Activated T-helper 2 cell treated with anti-CD3 and anti-CD28 coated beads, Interferon-gamma antibody, Interleukin-2, Interleukin-4, amounts not matched to agents 10 μg/mL and 5 μg/mL and 100 μg/mL, durations not matched to agents 14 hours and 24 hours and 36 hours (primary cell): ENCODE measurements at regions of chr9 and their contacts with region 1.

Region 1: GRCh38 chr9:121213136-121213806 is 11.6 kb upstream of the RAB14 start:
- DNase-seq: peak; percentile 53
- H3K4me3 Mint-ChIP-seq: no peak overlapping the region
- H3K27ac Mint-ChIP-seq: peak overlapping the region; percentile 40
- H3K4me1 Mint-ChIP-seq: peaks cover 17% of the 10 kb centered on the region
- H3K27me3 Mint-ChIP-seq: no peaks in the 10 kb centered on the region

Region 2: GRCh38 chr9:121150188-121150587 is 63.1 kb before region 1 on chr9:
- intact Hi-C with region 1: no loop called
- DNase-seq: no peak
- H3K4me3 Mint-ChIP-seq: no peak overlapping the region
- H3K27ac Mint-ChIP-seq: no peak overlapping the region
- H3K4me1 Mint-ChIP-seq: peaks cover 20% of the 10 kb centered on the region
- H3K27me3 Mint-ChIP-seq: no peaks in the 10 kb centered on the region

Region 3: DNA sequence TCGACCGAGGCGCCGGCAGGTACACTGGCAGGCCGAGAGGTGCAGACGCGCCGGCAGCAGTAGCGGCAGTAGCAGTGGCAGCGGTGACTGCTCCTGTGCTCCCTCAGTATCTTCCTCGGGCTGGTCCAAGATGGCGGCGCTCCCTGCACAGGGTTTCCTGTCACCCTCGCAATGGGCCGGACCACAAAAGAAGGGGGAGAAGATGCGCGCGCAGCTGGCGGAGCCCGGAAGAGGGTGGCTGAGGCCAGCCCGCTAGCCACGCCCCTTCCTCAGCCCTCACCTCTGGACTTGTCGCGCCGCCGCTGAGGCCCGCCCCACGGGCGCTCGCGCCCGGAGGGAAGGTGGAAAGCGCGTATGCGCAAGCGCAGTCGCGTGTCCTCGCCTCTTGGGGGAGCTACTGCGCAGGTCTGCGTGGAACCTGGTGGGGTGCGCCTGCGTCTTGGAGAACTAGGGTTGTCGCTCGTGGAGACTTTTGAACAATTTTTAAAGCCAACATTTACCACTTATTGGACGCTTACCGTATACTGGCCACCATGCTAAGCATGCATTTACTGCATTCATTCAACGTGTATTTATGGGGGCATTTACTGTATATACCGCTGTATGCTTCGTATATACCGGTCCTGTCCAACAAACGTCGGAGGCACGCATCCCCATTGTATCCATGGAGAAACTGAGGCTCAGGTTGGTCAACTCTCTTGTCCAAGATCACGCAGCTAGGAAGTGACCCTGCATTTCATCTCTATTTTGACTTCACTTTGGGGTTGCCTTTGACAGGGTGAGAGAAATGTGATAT is 11.3 kb before region 1 on chr9 and contains the start of gene RAB14:
- intact Hi-C with region 1: loop called (anchors 1 kb)
- DNase-seq: peak; percentile 100
- H3K4me3 Mint-ChIP-seq: peak within 1 kb of the TSS; percentile 96
- H3K27ac Mint-ChIP-seq: peak within 1 kb of the TSS; percentile 87
- H3K4me1 Mint-ChIP-seq: peaks cover 46% of the 10 kb centered on the region
- H3K27me3 Mint-ChIP-seq: no peaks in the 10 kb centered on the region
- total RNA-seq, gene RAB14: 62.0 and 63.2 TPM in 2 replicates